ENCODE measurements at regions of chr12 and their contacts with region 1.

Region 1: DNA sequence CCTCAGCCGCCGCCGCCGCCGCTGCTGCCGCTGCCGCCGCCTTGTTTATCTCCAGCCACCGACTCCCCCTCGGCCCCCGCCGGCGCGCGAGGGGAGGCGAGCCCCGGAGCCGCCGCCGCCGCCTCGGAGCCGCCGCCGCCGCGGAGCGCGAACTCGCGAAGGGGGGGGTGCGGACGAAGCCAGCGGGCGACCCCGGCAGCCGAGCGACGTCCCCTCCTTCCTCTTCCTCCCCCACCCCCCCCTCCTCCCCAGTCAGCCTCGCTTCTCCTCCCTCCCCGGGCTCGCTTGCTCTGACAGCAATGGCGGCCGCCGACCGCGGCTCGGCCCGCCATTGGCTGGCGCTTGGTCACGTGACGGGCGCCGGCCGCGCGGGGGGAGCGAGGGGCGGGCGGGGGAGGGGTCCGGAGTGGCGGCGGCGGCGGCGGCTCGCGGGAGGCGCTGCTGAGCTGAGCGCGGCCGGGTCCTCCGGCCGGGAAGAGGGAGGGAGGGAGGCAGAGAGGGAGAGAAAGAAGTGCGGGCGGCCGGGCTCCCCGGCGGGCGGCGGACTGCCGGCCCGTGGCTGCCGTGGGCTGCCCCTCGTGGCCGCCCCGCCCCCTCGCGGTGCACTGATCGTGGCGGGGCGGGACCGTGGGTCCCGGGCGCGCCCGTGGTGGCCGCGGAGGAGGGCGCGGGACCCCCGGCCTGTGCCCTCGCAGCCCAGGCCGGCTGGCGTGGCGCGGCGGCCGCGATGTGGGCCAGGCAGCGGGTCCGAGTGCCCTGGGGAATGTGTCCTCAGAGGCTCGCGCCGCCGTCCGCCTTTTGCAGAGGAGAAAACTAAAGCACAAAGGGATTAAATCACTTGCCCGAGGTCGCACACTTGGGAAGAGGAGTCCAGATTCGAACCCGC is at the start of gene MED13L:
- DNase-seq: peak; percentile 82
- H3K4me3 ChIP-seq: peak within 1 kb of the TSS; percentile 90 to 94 (median 91)
- H3K27ac ChIP-seq: peak within 1 kb of the TSS; percentile 62
- H3K4me1 ChIP-seq: peaks cover 19% of the 10 kb centered on the region
- H3K27me3 ChIP-seq: no peaks in the 10 kb centered on the region
- CTCF ChIP-seq: peak; percentile 5 to 24
- POLR2A ChIP-seq: no peak
- total RNA-seq, gene MED13L: 82.7 and 93.6 TPM in 2 replicates

Region 2: DNA sequence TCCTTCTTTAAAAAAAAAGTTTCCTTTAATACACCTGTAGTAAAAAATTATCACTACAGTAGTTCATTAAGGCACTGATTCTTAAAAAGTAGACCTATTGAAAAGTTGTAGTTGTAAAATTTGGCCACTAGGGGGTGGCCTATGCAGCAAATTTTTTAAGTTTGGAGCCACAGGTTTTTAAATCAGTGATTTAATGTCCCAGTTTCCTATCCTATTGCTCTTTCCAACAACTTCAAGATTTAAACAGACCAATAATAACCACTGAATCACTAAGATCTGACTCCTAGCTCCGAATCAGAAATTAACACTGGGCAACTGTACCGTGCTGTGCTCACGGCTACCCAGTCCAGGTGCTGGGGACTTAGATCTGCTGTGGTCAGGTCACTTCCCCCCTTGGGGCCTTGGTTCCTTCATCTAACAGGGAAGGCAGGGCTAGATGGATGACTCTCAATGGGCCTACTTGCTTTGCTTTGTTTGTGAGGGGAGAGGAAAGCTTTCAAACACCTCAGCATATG is 279.5 kb before region 1 on chr12:
- CTCF ChIA-PET with region 1: no interaction called
- POLR2A ChIA-PET with region 1: no interaction called
- dilution Hi-C with region 1: no loop called
- intact Hi-C with region 1: loop called (anchors 2 kb)
- DNase-seq: peak; percentile 70
- H3K4me3 ChIP-seq: no peak overlapping the region
- H3K27ac ChIP-seq: peak overlapping the region; percentile 34
- H3K4me1 ChIP-seq: no peaks in the 10 kb centered on the region
- H3K27me3 ChIP-seq: no peaks in the 10 kb centered on the region
- CTCF ChIP-seq: peak; percentile 47 to 52
- POLR2A ChIP-seq: no peak

Region 3: GRCh38 chr12:116066381-116067230 is 211.0 kb before region 1 on chr12:
- CTCF ChIA-PET with region 1: no interaction called
- POLR2A ChIA-PET with region 1: no interaction called
- dilution Hi-C with region 1: no loop called
- intact Hi-C with region 1: loop called (anchors 1 kb)
- DNase-seq: peak; percentile 46
- H3K4me3 ChIP-seq: no peak overlapping the region
- H3K27ac ChIP-seq: no peak overlapping the region
- H3K4me1 ChIP-seq: peaks cover 3% of the 10 kb centered on the region
- H3K27me3 ChIP-seq: no peaks in the 10 kb centered on the region
- CTCF ChIP-seq: peak; percentile 61 to 80
- POLR2A ChIP-seq: no peak

Region 4: DNA sequence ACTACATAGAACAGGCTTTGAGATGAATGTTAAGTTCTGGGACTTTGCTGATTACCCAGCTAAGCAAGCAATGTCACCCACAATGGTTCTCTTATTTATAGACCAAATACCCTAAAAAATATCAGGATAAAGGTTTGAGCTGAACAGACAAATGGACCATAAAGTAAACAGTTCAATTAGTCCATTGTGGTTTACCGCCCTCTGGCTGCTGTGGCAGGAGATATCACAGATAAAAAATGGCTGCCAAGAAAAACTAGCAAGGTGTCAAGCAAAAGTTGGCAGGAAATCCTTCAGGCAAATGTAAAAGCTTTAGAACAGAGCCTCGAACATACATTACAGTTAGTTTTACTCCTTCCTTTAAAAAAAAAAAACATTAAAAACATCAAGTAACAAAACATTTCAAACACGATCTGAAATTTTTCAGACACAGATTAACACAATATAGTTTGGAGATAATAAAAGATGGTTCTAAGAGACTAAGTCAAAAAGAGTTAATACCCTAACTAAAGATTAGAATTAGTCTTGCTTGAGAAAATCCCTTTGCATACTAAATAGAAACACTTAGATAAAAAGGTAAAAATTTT is 41.4 kb before region 1 on chr12:
- CTCF ChIA-PET with region 1: interaction called, 11 read pairs
- POLR2A ChIA-PET with region 1: no interaction called
- dilution Hi-C with region 1: no loop called
- intact Hi-C with region 1: loop called (anchors 2 kb)
- DNase-seq: peak; percentile 87
- H3K4me3 ChIP-seq: no peak overlapping the region
- H3K27ac ChIP-seq: peak overlapping the region; percentile 17
- H3K4me1 ChIP-seq: peaks cover 14% of the 10 kb centered on the region
- H3K27me3 ChIP-seq: no peaks in the 10 kb centered on the region
- CTCF ChIP-seq: peak; percentile 59
- POLR2A ChIP-seq: no peak

Region 5: GRCh38 chr12:116382686-116383531 is 105.3 kb after region 1 on chr12:
- CTCF ChIA-PET with region 1: interaction called, 8 read pairs
- POLR2A ChIA-PET with region 1: no interaction called
- dilution Hi-C with region 1: no loop called
- intact Hi-C with region 1: loop called (anchors 1 kb)
- DNase-seq: peak; percentile 94
- H3K4me3 ChIP-seq: no peak overlapping the region
- H3K27ac ChIP-seq: peak overlapping the region; percentile 83
- H3K4me1 ChIP-seq: peaks cover 31% of the 10 kb centered on the region
- H3K27me3 ChIP-seq: no peaks in the 10 kb centered on the region
- CTCF ChIP-seq: peak in 1 of 2 donors; percentile 21
- POLR2A ChIP-seq: no peak

Region 6: GRCh38 chr12:116508145-116509121 is 230.8 kb after region 1 on chr12:
- CTCF ChIA-PET with region 1: no interaction called
- POLR2A ChIA-PET with region 1: no interaction called
- dilution Hi-C with region 1: no loop called
- intact Hi-C with region 1: loop called (anchors 5 kb)
- DNase-seq: no peak
- H3K4me3 ChIP-seq: peak overlapping the region in 2 of 3 experiments; percentile 5 to 36
- H3K27ac ChIP-seq: no peak overlapping the region
- H3K4me1 ChIP-seq: no peaks in the 10 kb centered on the region
- H3K27me3 ChIP-seq: peaks cover 0 to 4% of the 10 kb centered on the region in 2 experiments
- CTCF ChIP-seq: no peak
- POLR2A ChIP-seq: no peak

Region 7: DNA sequence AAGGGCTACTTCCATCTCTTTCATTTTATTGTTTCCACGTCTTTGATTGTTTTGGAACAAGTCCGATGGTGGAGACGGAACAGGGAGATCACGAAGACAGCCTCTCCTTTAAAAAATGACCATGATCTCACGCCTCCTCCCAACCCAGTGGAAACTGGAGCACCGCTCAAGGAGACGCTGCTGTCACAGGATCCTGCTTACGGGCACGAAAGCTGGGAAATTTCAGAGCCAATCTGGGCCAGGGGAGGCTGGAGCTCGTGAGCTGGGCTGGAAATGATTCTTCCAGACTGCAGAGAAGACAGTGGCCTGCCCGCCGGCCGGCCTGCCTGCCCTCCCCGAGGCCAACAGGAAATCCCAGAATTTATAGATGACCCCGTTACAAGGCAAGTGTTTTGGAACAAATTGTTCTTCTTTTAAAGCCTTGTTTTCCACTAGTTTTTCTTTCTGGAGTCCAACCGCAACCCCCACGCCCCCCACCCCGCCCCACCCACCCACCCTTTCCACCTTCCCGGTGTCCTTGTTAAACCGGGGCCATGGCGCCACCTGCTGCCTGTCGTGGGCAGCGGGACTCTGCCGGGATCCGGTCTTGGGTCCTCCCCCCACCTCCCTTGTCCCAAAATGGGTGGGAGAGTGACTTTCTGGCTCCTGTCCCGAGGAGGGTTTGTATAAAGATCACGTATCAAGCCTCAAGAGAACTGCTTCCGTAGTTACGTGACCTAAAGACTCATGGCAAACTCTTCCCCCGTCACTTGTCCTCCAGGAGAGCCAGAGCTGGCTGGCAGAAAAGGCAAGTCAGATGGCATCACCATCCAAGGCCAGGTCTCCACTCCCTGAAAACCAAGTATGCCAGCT is 321.9 kb after region 1 on chr12:
- CTCF ChIA-PET with region 1: interaction called, 8 read pairs
- POLR2A ChIA-PET with region 1: no interaction called
- dilution Hi-C with region 1: no loop called
- intact Hi-C with region 1: loop called (anchors 1 kb)
- DNase-seq: peak; percentile 73
- H3K4me3 ChIP-seq: peak overlapping the region in 2 of 3 experiments; percentile 0 to 38
- H3K27ac ChIP-seq: peak overlapping the region; percentile 30
- H3K4me1 ChIP-seq: peaks cover 10% of the 10 kb centered on the region
- H3K27me3 ChIP-seq: no peaks in the 10 kb centered on the region
- CTCF ChIP-seq: peak; percentile 42 to 73
- POLR2A ChIP-seq: no peak